Kidney (tissue), 22 donors: ENCODE measurements at regions of chr9 and their contacts with region 1.

Region 1: GRCh38 chr9:124320062-124320973 is 62.6 kb downstream of the NEK6 start:
- DNase-seq: peak in 4 of 5 donors; percentile 62 to 85 (median 74)
- H3K4me3 ChIP-seq: no peak overlapping the region
- H3K27ac ChIP-seq: no peak overlapping the region
- H3K4me1 ChIP-seq: no peaks in the 10 kb centered on the region
- H3K27me3 ChIP-seq: no peaks in the 10 kb centered on the region
- CTCF ChIP-seq: peak; percentile 85

Region 2: GRCh38 chr9:124133727-124134126 is 186.6 kb before region 1 on chr9:
- intact Hi-C with region 1: loop called (anchors 5 kb)
- DNase-seq: peak in 1 of 5 donors; percentile 13
- H3K4me3 ChIP-seq: no peak overlapping the region
- H3K27ac ChIP-seq: no peak overlapping the region
- H3K4me1 ChIP-seq: no peaks in the 10 kb centered on the region
- H3K27me3 ChIP-seq: no peaks in the 10 kb centered on the region
- CTCF ChIP-seq: peak; percentile 43

Region 3: DNA sequence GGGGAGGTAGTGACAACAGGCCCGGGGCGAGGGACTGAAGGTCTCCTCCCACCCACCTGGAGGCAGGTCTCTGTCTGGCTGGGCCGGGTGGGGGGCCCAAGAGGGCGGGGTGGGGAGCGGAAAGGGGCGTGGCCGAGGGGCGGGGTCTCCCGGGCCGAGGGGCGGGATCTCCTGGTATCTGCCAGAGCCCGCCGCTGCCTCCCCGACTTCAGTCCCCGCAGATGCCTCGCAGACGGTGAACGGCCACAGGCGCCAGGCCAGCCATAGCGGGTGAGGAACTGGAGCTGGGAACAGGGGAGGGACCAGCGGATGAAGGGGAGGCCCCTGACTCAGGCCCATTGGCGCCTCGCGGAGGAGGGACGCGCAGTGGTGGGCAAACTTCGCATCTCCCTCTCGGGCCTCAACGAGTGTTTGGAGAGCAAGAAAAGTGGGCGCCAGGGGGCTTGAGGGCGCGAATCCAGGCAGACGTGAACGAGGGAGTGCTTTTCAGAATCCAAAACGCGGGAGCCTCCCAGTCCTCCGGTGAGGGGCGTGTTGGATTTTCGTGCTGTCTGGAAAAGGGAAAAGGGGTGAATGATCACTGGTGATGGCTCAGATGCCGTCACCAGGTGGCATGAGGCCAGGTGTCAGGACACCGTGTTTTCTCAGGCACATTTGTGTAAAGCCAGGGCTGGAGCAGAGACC is 130.1 kb after region 1 on chr9 and contains the start of gene ADGRD2:
- intact Hi-C with region 1: no loop called
- DNase-seq: peak in 4 of 5 donors; percentile 70 to 84 (median 72)
- H3K4me3 ChIP-seq: no peak within 1 kb of the TSS
- H3K27ac ChIP-seq: no peak within 1 kb of the TSS
- H3K4me1 ChIP-seq: peaks cover 0 to 4% (median 0%) of the 10 kb centered on the region in 3 donors
- H3K27me3 ChIP-seq: peaks cover 20% of the 10 kb centered on the region
- CTCF ChIP-seq: no peak
- total RNA-seq, gene ADGRD2: not detected